Dendritic cell treated with granulocyte-macrophage colony-stimulating factor and Interleukin-4, amounts not matched to agents 40 ng/mL and 50 ng/mL, for 4 days (primary cell): ENCODE measurements at regions of chr10 and their contacts with region 1.

Region 1: DNA sequence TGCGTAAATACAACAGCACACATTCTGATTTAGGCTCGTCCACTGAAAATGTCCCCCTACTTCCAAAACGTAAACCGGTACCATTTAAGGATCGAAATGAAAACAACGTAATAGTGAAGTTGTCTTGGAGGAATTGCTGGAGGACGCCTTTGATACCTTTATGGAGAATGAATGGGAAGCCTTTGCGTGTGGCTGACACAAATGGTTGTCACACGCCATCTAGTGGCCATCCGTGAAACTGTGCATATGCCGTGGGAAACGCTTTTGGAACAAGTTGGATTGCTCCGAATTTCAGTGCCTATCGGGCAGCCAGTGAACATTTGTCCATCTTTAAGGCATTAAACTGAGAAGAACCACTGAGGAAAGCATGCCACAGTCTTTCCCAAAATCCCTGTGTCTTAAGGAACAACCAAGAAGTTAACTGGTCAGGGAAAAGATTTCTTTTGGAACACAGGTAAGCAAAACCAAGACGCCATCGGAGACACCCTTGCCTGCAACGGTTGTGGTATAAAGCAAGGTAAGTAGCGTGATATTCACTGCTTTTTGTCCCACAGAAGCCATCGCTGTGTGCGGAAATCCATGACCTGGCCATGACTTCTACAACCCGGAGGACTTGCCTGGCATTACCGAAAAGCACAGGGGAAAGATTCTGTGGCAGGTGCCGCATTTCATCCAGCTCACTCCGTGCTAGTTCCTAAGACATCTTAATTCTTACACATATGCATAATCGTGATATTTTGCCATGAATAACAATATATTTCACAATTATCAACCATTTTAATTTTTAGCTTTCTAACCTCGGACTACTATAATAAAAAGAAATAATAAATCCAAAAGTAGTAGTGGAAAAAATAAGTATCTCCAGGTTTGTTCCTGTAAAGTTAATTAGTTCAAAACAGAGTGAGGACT is 100.6 kb downstream of the FAM204A start:
- H3K4me3 Mint-ChIP-seq: no peak overlapping the region
- H3K27ac Mint-ChIP-seq: no peak overlapping the region
- H3K4me1 Mint-ChIP-seq: no peaks in the 10 kb centered on the region
- H3K27me3 Mint-ChIP-seq: peaks cover 42% of the 10 kb centered on the region

Region 2: GRCh38 chr10:117216611-117217195 is 1024.8 kb before region 1 on chr10:
- intact Hi-C with region 1: loop called (anchors 2 kb)
- H3K4me3 Mint-ChIP-seq: peak overlapping the region; percentile 75
- H3K27ac Mint-ChIP-seq: no peak overlapping the region
- H3K4me1 Mint-ChIP-seq: peaks cover 10% of the 10 kb centered on the region
- H3K27me3 Mint-ChIP-seq: peaks cover 64% of the 10 kb centered on the region

Region 3: DNA sequence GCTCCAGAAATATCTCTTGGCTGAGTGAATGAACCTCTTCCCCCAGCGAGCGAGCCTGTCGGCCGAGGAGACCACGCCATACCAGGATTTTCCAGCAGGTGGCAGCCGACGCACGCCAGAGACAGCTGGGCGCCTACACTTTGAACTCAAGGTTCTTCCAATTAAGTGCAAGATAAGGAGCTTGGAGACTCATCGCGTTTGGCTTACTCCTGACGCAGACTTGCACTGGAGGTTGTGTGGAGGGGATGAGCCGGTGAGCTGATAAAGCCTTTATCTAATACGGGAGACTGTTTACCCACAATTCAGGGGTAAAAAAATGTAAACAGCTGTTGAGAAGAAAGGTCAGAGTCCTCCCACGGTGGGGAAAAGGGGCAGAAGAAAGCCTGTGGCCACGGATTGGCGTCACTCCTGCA is 744.9 kb before region 1 on chr10:
- intact Hi-C with region 1: loop called (anchors 1 kb)
- H3K4me3 Mint-ChIP-seq: no peak overlapping the region
- H3K27ac Mint-ChIP-seq: no peak overlapping the region
- H3K4me1 Mint-ChIP-seq: no peaks in the 10 kb centered on the region
- H3K27me3 Mint-ChIP-seq: peaks cover 36% of the 10 kb centered on the region

Region 4: GRCh38 chr10:117537436-117537903 is 704.0 kb before region 1 on chr10:
- intact Hi-C with region 1: loop called (anchors 2 kb)
- H3K4me3 Mint-ChIP-seq: no peak overlapping the region
- H3K27ac Mint-ChIP-seq: no peak overlapping the region
- H3K4me1 Mint-ChIP-seq: peaks cover 21% of the 10 kb centered on the region
- H3K27me3 Mint-ChIP-seq: peaks cover 97% of the 10 kb centered on the region

Region 5: GRCh38 chr10:117860823-117861222 is 380.7 kb before region 1 on chr10:
- intact Hi-C with region 1: loop called (anchors 2 kb)
- H3K4me3 Mint-ChIP-seq: no peak overlapping the region
- H3K27ac Mint-ChIP-seq: no peak overlapping the region
- H3K4me1 Mint-ChIP-seq: no peaks in the 10 kb centered on the region
- H3K27me3 Mint-ChIP-seq: peaks cover 1% of the 10 kb centered on the region

Region 6: GRCh38 chr10:118151461-118151860 is 90.0 kb before region 1 on chr10:
- intact Hi-C with region 1: no loop called
- H3K4me3 Mint-ChIP-seq: no peak overlapping the region
- H3K27ac Mint-ChIP-seq: no peak overlapping the region
- H3K4me1 Mint-ChIP-seq: no peaks in the 10 kb centered on the region
- H3K27me3 Mint-ChIP-seq: no peaks in the 10 kb centered on the region